HEK293 (cell line): ENCODE measurements at regions of chr1 and their contacts with region 1.

Region 1: GRCh38 chr1:32681509-32681908 is 21.1 kb downstream of the SYNC start:
- H3K4me3 ChIP-seq: no peak overlapping the region
- H3K27ac ChIP-seq: no peak overlapping the region
- H3K4me1 ChIP-seq: no peaks in the 10 kb centered on the region
- CTCF ChIP-seq: no peak

Region 2: GRCh38 chr1:31762726-31763670 is 918.5 kb before region 1 on chr1:
- CTCF ChIA-PET with region 1: no interaction called
- POLR2A ChIA-PET with region 1: interaction called, 11 read pairs
- H3K4me3 ChIP-seq: peak overlapping the region; percentile 50
- H3K27ac ChIP-seq: peak overlapping the region; percentile 39; the same call in 1 of the 2 replicates
- H3K4me1 ChIP-seq: no peaks in the 10 kb centered on the region; the same call in 1 of the 2 replicates
- CTCF ChIP-seq: peak; percentile 68

Region 3: GRCh38 chr1:32666901-32667566 is 14.5 kb before region 1 on chr1:
- CTCF ChIA-PET with region 1: no interaction called
- POLR2A ChIA-PET with region 1: no interaction called
- H3K4me3 ChIP-seq: no peak overlapping the region
- H3K27ac ChIP-seq: no peak overlapping the region
- H3K4me1 ChIP-seq: no peaks in the 10 kb centered on the region
- CTCF ChIP-seq: no peak